Right cardiac atrium (tissue), 5 donors: ENCODE measurements at regions of chr15 and their contacts with region 1.

Region 1: DNA sequence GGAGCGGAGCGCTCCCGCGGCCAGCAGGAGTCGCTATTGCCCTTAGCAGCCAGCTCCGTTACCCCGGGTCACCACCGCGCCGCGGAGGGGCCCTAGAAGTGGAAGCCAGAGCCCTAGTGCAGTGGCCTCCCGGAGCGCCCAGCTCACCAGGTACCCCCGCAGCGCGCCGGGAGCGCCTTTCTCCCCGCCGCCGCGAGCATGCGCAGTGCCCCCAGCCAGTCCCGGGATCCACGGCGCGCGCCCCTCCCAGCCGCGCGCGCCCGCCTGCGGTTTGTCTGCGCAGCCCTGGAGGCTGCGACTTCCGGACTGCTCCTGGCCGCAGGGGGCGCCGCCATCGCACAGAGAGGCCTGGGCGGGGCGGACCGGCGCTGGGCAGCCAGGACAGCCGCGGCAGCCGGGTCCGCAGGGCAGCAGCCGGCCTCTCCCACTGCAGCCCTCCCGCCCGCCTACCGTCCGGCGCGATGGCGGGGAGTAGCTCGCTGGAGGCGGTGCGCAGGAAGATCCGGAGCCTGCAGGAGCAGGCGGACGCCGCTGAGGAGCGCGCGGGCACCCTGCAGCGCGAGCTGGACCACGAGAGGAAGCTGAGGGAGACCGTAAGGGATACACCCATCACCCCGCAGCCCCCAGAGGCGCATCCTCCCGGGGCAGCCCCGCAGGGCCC is 5.7 kb downstream of the TPM1 start:
- DNase-seq: peak; percentile 90 to 97 (median 96)
- ATAC-seq: peak; percentile 87 to 94
- H3K4me3 ChIP-seq: peak overlapping the region; percentile 86
- H3K27ac ChIP-seq: peak overlapping the region; percentile 74
- H3K4me1 ChIP-seq: peaks cover 10% of the 10 kb centered on the region
- H3K27me3 ChIP-seq: no peaks in the 10 kb centered on the region

Region 2: GRCh38 chr15:62782039-62782791 is 266.0 kb before region 1 on chr15:
- intact Hi-C with region 1: loop called in 2 of 4 experiments (anchors 2 to 10 kb)
- DNase-seq: peak; percentile 87 to 90 (median 87)
- ATAC-seq: peak; percentile 92
- H3K4me3 ChIP-seq: no peak overlapping the region
- H3K27ac ChIP-seq: peak overlapping the region; percentile 78
- H3K4me1 ChIP-seq: peaks cover 5% of the 10 kb centered on the region
- H3K27me3 ChIP-seq: no peaks in the 10 kb centered on the region

Region 3: DNA sequence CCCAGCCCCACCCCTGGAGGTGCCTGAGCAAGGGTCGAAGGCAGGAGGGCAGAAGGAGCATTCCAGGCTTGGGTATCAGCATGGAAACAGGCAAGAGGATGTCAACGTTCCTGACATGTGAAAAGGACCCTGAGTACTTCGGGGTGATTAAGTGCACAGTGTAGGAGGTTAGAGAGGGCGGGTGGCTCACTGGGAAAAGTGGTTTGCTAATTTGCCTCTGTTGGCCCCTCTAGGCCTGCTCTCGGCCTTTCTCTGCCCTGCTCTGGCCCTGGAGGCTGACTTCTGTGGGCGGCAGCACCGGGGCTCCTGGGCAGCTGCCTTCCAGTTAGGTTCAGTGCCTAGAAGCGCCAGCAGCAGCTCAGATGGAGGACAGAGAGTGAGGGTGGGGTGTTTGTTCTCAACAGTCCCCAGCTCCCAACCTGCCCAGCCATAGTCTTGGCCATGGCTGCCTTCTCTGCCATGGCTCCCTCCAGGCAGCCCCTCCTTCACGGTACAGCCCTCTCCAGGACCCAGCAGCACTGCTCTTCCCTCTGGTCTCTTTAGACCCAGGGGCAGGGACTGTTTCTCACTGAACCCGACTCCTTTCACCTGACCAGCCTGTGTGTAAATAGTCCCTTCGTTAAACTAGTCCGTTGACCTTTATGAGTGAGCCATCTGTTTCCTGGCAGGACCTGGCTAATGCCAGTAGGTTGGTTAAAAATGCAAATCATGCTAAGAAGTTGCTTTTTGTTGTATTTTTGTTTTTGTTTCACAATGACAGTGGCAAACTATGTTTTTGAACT is 112.8 kb before region 1 on chr15:
- intact Hi-C with region 1: loop called in 2 of 4 experiments (anchors 10 kb)
- DNase-seq: no peak
- ATAC-seq: no peak
- H3K4me3 ChIP-seq: no peak overlapping the region
- H3K27ac ChIP-seq: no peak overlapping the region
- H3K4me1 ChIP-seq: peaks cover 7% of the 10 kb centered on the region
- H3K27me3 ChIP-seq: no peaks in the 10 kb centered on the region

Region 4: GRCh38 chr15:63093486-63094205 is 45.4 kb after region 1 on chr15:
- intact Hi-C with region 1: loop called in 3 of 4 experiments (anchors 2 to 5 kb)
- DNase-seq: peak; percentile 79 to 89 (median 86)
- ATAC-seq: peak; percentile 91 to 92
- H3K4me3 ChIP-seq: no peak overlapping the region
- H3K27ac ChIP-seq: no peak overlapping the region
- H3K4me1 ChIP-seq: peaks cover 7% of the 10 kb centered on the region
- H3K27me3 ChIP-seq: no peaks in the 10 kb centered on the region